CD4-positive, alpha-beta memory T cell (primary cell): ENCODE measurements at regions of chr2 and their contacts with region 1.

Region 1: GRCh38 chr2:190679813-190680591 is 31.1 kb downstream of the NAB1 start:
- DNase-seq: peak; percentile 49 to 70 (median 56)
- H3K4me3 ChIP-seq: no peak overlapping the region
- H3K4me3 Mint-ChIP-seq: peak overlapping the region in 5 of 8 donors; percentile 16 to 84 (median 36)
- H3K27ac ChIP-seq: no peak overlapping the region
- H3K27ac Mint-ChIP-seq: peak overlapping the region; percentile 19 to 94 (median 88)
- H3K4me1 ChIP-seq: peaks cover 42% of the 10 kb centered on the region
- H3K4me1 Mint-ChIP-seq: peaks cover 36 to 44% (median 40%) of the 10 kb centered on the region in 4 donors
- H3K27me3 ChIP-seq: no peaks in the 10 kb centered on the region
- H3K27me3 Mint-ChIP-seq: no peaks in the 10 kb centered on the region

Region 2: DNA sequence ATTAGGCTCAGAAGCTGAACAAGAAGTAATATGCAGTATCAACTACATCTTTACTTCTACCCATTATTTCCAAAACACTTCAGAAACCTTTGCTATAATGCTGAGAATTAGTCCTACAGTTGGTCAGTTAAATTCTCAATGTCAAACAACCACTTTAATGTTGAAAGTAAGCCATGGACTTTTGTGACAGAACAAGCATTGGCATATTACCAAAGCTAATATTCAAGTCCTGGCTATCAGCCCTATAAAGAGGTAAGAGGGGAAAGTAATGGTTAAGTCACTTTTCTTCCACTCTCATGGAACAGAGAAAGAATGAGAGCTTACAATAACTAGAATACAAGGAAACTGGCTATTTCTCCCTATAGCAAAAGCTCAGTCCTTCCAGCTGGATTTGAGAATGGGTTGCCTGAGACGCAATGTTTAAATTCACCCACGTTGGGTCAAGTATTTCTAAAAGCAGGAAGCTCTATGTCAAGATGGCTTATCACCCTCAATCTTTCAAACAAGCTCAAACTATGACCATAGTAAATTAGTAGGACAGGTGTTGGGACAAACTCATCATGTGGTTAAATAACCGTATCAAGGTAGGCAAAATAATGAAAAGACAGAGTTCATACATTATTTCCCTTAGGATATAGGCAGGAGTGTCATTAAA is 303.3 kb before region 1 on chr2:
- CTCF ChIA-PET with region 1: interaction called, 125 read pairs
- POLR2A ChIA-PET with region 1: no interaction called
- intact Hi-C with region 1: no loop called
- DNase-seq: no peak
- H3K4me3 ChIP-seq: no peak overlapping the region
- H3K4me3 Mint-ChIP-seq: no peak overlapping the region
- H3K27ac ChIP-seq: no peak overlapping the region
- H3K27ac Mint-ChIP-seq: no peak overlapping the region
- H3K4me1 ChIP-seq: no peaks in the 10 kb centered on the region
- H3K4me1 Mint-ChIP-seq: peaks cover 0 to 2% (median 0%) of the 10 kb centered on the region in 4 donors
- H3K27me3 ChIP-seq: no peaks in the 10 kb centered on the region
- H3K27me3 Mint-ChIP-seq: no peaks in the 10 kb centered on the region

Region 3: GRCh38 chr2:190515687-190516086 is 164.3 kb before region 1 on chr2:
- CTCF ChIA-PET with region 1: interaction called, 18 read pairs
- POLR2A ChIA-PET with region 1: interaction called, 3 read pairs
- intact Hi-C with region 1: no loop called
- DNase-seq: peak in 4 of 5 donors; percentile 53 to 65 (median 58)
- H3K4me3 ChIP-seq: no peak overlapping the region
- H3K4me3 Mint-ChIP-seq: peak overlapping the region in 7 of 8 donors; percentile 22 to 68 (median 50)
- H3K27ac ChIP-seq: no peak overlapping the region
- H3K27ac Mint-ChIP-seq: peak overlapping the region; percentile 8 to 84 (median 62)
- H3K4me1 ChIP-seq: peaks cover 37% of the 10 kb centered on the region
- H3K4me1 Mint-ChIP-seq: peaks cover 20 to 45% (median 33%) of the 10 kb centered on the region in 4 donors
- H3K27me3 ChIP-seq: no peaks in the 10 kb centered on the region
- H3K27me3 Mint-ChIP-seq: no peaks in the 10 kb centered on the region

Region 4: GRCh38 chr2:190636373-190636772 is 43.6 kb before region 1 on chr2:
- CTCF ChIA-PET with region 1: interaction called, 82 read pairs
- POLR2A ChIA-PET with region 1: no interaction called
- intact Hi-C with region 1: loop called (anchors 1 kb)
- DNase-seq: no peak
- H3K4me3 ChIP-seq: no peak overlapping the region
- H3K4me3 Mint-ChIP-seq: no peak overlapping the region
- H3K27ac ChIP-seq: no peak overlapping the region
- H3K27ac Mint-ChIP-seq: peak overlapping the region in 1 of 7 donors; percentile 12
- H3K4me1 ChIP-seq: no peaks in the 10 kb centered on the region
- H3K4me1 Mint-ChIP-seq: peaks cover 0 to 6% (median under 1%) of the 10 kb centered on the region in 4 donors
- H3K27me3 ChIP-seq: no peaks in the 10 kb centered on the region
- H3K27me3 Mint-ChIP-seq: no peaks in the 10 kb centered on the region

Region 5: DNA sequence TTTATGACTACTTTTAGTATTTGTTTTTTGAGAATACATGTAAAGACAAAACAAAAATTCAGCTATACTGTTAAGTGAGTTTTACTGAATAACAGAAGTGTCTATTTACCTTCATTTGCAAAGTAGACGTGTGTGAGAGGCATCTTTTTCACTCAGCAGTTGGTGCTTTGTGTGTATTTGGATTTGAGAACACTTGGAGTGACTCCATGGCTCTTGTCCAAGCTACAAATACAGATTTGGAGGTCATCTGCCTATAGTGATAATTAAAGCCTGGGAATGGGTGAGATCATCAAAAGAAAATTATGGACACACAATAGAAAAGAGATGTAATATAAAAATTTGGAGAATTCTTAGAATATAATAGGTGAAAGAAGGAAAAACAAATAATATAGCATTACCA is 24.9 kb before region 1 on chr2:
- CTCF ChIA-PET with region 1: interaction called, 51 read pairs
- POLR2A ChIA-PET with region 1: interaction called, 11 read pairs
- intact Hi-C with region 1: no loop called
- DNase-seq: no peak
- H3K4me3 ChIP-seq: no peak overlapping the region
- H3K4me3 Mint-ChIP-seq: no peak overlapping the region
- H3K27ac ChIP-seq: no peak overlapping the region
- H3K27ac Mint-ChIP-seq: no peak overlapping the region
- H3K4me1 ChIP-seq: peaks cover 76% of the 10 kb centered on the region
- H3K4me1 Mint-ChIP-seq: peaks cover 26 to 52% (median 39%) of the 10 kb centered on the region in 4 donors
- H3K27me3 ChIP-seq: no peaks in the 10 kb centered on the region
- H3K27me3 Mint-ChIP-seq: no peaks in the 10 kb centered on the region

Region 6: DNA sequence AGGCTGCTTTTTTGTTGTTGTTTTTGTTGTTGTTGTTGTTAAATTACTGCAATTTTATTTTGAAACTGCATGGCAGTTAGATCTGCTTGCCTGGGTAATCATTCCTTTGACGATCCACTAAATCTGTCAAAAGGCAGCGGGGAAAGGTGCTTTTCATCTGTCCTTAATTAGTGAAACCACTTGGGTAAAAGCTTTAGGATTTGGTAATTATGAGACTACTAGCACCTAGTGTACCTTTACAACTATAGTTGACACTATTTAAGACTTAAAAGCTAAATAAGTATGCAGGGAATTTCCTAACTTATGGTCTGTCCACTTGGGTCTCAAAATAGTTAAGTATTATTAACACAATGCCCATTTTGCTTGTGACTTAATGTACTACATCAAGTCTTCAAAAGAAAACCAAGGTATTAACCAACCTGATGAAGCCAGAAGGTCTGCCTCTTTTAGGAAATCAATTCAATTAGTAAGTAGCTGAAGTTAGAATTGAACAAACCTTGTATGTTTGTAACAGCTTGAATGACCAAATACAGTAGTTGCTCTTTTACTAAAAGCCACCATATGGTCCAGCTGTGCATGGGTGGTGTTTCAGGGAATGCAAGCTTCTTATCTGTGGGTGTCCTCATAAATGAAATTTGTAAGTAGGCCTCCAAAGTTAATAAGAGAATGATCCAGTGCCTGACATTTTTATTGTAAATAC is 13.7 kb after region 1 on chr2:
- CTCF ChIA-PET with region 1: interaction called, 26 read pairs
- POLR2A ChIA-PET with region 1: interaction called, 3 read pairs
- intact Hi-C with region 1: no loop called
- DNase-seq: no peak
- H3K4me3 ChIP-seq: no peak overlapping the region
- H3K4me3 Mint-ChIP-seq: no peak overlapping the region
- H3K27ac ChIP-seq: no peak overlapping the region
- H3K27ac Mint-ChIP-seq: peak overlapping the region in 3 of 7 donors; percentile 14 to 77 (median 39)
- H3K4me1 ChIP-seq: no peaks in the 10 kb centered on the region
- H3K4me1 Mint-ChIP-seq: peaks cover 0 to 9% (median under 1%) of the 10 kb centered on the region in 4 donors
- H3K27me3 ChIP-seq: no peaks in the 10 kb centered on the region
- H3K27me3 Mint-ChIP-seq: no peaks in the 10 kb centered on the region